MCF 10A (cell line): ENCODE measurements at regions of chr19 and their contacts with region 1.

Region 1: DNA sequence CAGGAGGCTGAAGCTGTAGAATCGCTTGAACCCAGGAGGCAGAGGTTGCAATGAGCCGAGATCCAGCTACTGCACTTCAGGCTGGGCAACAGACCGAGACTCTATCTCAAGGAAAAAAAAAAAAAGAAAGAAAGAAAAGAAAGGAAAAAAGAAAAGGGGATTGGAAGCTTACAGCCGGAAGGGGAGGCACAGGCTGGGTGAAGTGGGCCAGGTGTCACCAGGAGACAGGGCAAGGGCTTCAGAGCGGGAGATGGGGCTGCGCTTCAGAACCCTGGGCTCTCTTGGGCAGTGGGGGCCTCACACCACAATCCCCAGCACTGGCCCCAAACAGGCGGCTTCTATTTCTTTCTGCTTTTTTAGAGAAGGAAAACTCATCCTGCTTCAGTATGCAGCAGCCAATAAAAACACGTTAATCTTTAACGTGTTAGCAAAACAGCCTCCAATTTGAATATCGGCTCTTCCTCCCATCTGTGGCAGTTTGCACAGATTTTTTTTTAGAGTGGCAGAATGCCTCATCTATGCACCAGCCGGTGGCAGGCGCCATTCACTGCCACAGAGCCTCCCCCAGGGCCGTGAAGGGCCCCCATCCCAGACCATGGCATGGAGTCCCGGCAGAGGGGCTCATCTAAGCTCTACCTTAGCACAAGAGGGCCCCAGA is 46.6 kb upstream of the C19orf12 start:
- DNase-seq: no peak
- H3K4me3 Mint-ChIP-seq: no peak overlapping the region
- H3K27ac Mint-ChIP-seq: no peak overlapping the region
- H3K4me1 Mint-ChIP-seq: no peaks in the 10 kb centered on the region
- H3K27me3 Mint-ChIP-seq: no peaks in the 10 kb centered on the region
- CTCF ChIP-seq: no peak

Region 2: DNA sequence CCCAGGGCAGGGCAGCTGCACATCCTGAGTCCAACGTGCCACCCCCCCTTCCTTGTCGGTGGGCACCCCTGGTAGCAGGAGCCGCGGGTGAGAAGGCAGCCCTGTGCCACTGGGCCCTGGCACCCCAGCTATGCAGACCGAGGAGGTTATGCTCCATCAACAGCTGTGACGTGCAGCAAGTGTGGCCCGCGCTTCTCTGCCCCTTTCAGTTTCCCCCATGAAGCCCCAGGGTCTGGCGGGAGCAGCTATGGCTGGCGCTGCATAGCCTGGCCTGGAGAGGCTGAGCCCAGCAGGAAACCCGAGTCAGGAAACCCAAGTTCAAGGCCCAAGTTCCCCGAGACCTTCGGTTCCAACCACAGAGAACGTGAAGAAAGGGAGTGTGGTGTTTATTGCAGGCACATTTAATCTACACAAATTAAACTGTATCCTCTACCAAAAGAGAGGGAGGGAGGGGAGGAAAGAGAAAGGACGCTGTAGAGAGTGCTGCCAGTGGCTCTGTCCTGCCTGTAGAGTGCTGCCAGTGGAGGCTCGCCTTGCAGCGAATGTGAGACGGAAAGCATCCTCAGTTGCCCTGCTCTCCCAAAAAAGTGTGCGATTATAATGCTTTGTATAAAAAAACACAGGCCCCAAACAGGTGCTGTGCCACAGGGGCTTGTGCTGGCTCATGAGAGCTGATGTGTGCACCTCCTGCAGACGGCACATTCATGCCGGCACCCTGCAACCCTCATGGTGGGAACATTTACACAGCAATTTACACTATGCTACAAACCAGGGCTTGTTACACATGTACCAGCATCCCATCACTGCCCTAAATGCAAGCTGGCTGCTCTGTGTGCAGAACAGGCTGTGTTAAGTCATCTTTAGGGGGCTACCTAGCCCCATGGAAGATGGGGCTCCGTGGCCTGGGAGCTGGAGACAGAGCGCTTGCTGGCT is 139.3 kb before region 1 on chr19:
- CTCF ChIA-PET with region 1: no interaction called
- POLR2A ChIA-PET with region 1: no interaction called
- intact Hi-C with region 1: no loop called
- DNase-seq: no peak
- H3K4me3 Mint-ChIP-seq: no peak overlapping the region
- H3K27ac Mint-ChIP-seq: no peak overlapping the region
- H3K4me1 Mint-ChIP-seq: no peaks in the 10 kb centered on the region
- H3K27me3 Mint-ChIP-seq: peaks cover 21% of the 10 kb centered on the region
- CTCF ChIP-seq: no peak

Region 3: DNA sequence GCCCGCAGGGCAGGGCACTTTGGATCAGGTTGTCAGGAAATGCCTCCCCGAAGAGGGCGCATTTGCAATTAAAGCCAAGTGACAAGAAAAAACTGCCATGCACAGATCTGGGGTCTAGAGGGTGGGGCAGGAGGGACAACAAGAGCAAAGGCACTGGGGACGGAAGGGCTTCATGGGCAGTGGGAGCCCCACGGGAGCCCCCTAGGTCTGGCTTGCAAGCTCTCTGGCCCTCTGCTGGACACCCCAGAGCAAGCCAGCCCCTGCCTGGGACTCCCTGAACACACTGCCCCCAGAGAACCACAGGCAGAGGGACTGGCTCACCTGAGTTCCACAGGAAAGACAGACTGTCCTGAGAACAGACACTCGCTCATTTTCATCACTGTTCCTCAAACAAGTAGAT is 16.5 kb before region 1 on chr19:
- CTCF ChIA-PET with region 1: interaction called, 25 read pairs
- POLR2A ChIA-PET with region 1: no interaction called
- intact Hi-C with region 1: no loop called
- DNase-seq: no peak
- H3K4me3 Mint-ChIP-seq: no peak overlapping the region
- H3K27ac Mint-ChIP-seq: no peak overlapping the region
- H3K4me1 Mint-ChIP-seq: no peaks in the 10 kb centered on the region
- H3K27me3 Mint-ChIP-seq: peaks cover 26% of the 10 kb centered on the region
- CTCF ChIP-seq: peak; percentile 9

Region 4: GRCh38 chr19:29779921-29780320 is 18.2 kb after region 1 on chr19:
- CTCF ChIA-PET with region 1: interaction called, 13 read pairs
- POLR2A ChIA-PET with region 1: no interaction called
- intact Hi-C with region 1: no loop called
- DNase-seq: no peak
- H3K4me3 Mint-ChIP-seq: no peak overlapping the region
- H3K27ac Mint-ChIP-seq: no peak overlapping the region
- H3K4me1 Mint-ChIP-seq: no peaks in the 10 kb centered on the region
- H3K27me3 Mint-ChIP-seq: no peaks in the 10 kb centered on the region
- CTCF ChIP-seq: no peak

Region 5: GRCh38 chr19:29858000-29858596 is 96.4 kb after region 1 on chr19:
- CTCF ChIA-PET with region 1: interaction called, 12 read pairs
- POLR2A ChIA-PET with region 1: no interaction called
- intact Hi-C with region 1: no loop called
- DNase-seq: peak; percentile 38
- H3K4me3 Mint-ChIP-seq: no peak overlapping the region
- H3K27ac Mint-ChIP-seq: no peak overlapping the region
- H3K4me1 Mint-ChIP-seq: no peaks in the 10 kb centered on the region
- H3K27me3 Mint-ChIP-seq: peaks cover 15% of the 10 kb centered on the region
- CTCF ChIP-seq: peak; percentile 52

Region 6: DNA sequence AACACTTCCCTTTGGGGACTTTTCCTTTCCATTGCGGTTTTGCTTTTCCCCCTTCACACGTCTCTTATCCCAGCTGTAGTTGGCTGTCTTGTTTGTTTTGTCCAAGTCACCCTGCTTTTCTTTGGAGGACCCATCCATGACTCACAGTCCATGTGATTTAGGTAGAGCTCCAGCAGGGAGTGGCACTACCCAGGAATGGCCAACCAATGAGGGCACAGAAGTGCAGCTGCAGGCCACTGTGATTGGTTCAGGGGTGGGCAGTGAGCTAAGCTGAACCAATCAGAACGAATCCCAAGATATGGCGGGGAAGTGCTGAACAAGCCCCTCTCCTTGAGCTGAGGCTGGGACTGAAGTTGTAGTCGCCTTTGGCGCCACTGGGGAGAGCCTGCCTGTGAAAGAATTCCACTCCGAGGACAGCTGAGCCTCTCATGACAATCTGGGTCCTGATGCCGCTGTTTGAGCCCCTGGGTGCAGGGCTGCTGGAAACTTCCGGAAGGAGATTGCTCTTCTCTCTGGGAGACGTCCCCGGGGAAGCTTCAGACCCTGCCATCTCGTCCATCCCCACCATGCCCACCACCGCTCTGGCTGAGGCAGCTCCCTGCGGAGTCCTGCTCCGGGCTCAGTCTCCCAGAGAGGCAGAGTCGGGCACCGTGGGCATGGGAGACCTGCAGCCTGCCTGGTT is 117.4 kb after region 1 on chr19:
- CTCF ChIA-PET with region 1: interaction called, 73 read pairs
- POLR2A ChIA-PET with region 1: no interaction called
- intact Hi-C with region 1: no loop called
- DNase-seq: peak; percentile 67
- H3K4me3 Mint-ChIP-seq: no peak overlapping the region
- H3K27ac Mint-ChIP-seq: no peak overlapping the region
- H3K4me1 Mint-ChIP-seq: peaks cover 21% of the 10 kb centered on the region
- H3K27me3 Mint-ChIP-seq: peaks cover 10% of the 10 kb centered on the region
- CTCF ChIP-seq: no peak